B cell (primary cell): ENCODE measurements at regions of chr21 and their contacts with region 1.

Region 1: DNA sequence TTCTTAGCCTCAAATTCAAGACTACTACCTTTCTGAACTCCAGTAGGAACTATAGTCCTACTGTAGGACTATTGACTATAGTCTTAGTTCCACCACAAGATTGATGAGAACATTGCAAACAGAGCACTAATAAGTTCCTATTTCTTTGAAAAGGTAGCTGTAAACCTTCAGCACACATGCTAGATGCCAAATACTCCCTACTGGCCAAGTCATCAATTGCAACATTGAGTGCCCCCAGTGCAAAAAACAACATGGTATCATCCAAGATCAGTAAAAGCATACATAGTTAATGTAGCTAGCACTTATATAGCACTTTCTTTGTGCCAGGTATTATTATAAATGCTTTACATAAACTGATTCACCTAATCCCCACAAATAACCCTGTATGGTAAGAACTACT is 99.8 kb downstream of the MRPL39 start:
- DNase-seq: peak; percentile 16
- ATAC-seq: no peak
- H3K4me3 ChIP-seq: no peak overlapping the region
- H3K4me3 Mint-ChIP-seq: no peak overlapping the region
- H3K27ac ChIP-seq: no peak overlapping the region
- H3K27ac Mint-ChIP-seq: no peak overlapping the region
- H3K4me1 ChIP-seq: peaks cover 4 to 11% of the 10 kb centered on the region in 2 donors
- H3K4me1 Mint-ChIP-seq: peaks cover 34% of the 10 kb centered on the region
- H3K27me3 ChIP-seq: no peaks in the 10 kb centered on the region
- H3K27me3 Mint-ChIP-seq: no peaks in the 10 kb centered on the region
- CTCF ChIP-seq: peak; percentile 26

Region 2: GRCh38 chr21:25464275-25464674 is 43.2 kb before region 1 on chr21:
- CTCF ChIA-PET with region 1: no interaction called
- POLR2A ChIA-PET with region 1: no interaction called
- intact Hi-C with region 1: loop called (anchors 5 kb)
- DNase-seq: no peak
- ATAC-seq: no peak
- H3K4me3 ChIP-seq: no peak overlapping the region
- H3K4me3 Mint-ChIP-seq: no peak overlapping the region
- H3K27ac ChIP-seq: no peak overlapping the region
- H3K27ac Mint-ChIP-seq: no peak overlapping the region
- H3K4me1 ChIP-seq: peaks cover 4 to 5% of the 10 kb centered on the region in 2 donors
- H3K4me1 Mint-ChIP-seq: peaks cover 27% of the 10 kb centered on the region
- H3K27me3 ChIP-seq: no peaks in the 10 kb centered on the region
- H3K27me3 Mint-ChIP-seq: no peaks in the 10 kb centered on the region
- CTCF ChIP-seq: no peak

Region 3: DNA sequence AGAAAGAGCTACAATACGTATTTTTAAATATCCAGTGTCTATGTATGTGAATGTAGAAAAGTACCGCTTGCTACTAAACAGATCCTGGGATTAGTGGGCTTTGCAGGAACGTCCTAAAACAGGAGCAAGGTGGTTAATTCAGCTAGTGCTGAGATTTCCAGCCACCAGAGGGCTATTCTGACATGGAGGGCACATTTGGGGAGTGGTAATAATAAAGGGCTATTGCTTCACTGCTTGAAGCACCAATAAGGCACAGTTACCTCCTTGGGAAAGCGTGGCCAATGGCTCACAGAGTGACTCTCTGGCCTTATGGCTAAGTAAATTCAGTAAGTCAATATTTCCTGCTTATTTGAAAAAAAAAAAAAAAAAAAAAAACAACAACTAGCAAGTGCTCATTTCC is 379.6 kb after region 1 on chr21:
- CTCF ChIA-PET with region 1: no interaction called
- POLR2A ChIA-PET with region 1: no interaction called
- intact Hi-C with region 1: no loop called
- DNase-seq: no peak
- ATAC-seq: no peak
- H3K4me3 ChIP-seq: no peak overlapping the region
- H3K4me3 Mint-ChIP-seq: no peak overlapping the region
- H3K27ac ChIP-seq: no peak overlapping the region
- H3K27ac Mint-ChIP-seq: no peak overlapping the region
- H3K4me1 ChIP-seq: no peaks in the 10 kb centered on the region
- H3K4me1 Mint-ChIP-seq: no peaks in the 10 kb centered on the region
- H3K27me3 ChIP-seq: no peaks in the 10 kb centered on the region
- H3K27me3 Mint-ChIP-seq: no peaks in the 10 kb centered on the region
- CTCF ChIP-seq: no peak